ENCODE measurements at regions of chr10 and their contacts with region 1.

Region 1: DNA sequence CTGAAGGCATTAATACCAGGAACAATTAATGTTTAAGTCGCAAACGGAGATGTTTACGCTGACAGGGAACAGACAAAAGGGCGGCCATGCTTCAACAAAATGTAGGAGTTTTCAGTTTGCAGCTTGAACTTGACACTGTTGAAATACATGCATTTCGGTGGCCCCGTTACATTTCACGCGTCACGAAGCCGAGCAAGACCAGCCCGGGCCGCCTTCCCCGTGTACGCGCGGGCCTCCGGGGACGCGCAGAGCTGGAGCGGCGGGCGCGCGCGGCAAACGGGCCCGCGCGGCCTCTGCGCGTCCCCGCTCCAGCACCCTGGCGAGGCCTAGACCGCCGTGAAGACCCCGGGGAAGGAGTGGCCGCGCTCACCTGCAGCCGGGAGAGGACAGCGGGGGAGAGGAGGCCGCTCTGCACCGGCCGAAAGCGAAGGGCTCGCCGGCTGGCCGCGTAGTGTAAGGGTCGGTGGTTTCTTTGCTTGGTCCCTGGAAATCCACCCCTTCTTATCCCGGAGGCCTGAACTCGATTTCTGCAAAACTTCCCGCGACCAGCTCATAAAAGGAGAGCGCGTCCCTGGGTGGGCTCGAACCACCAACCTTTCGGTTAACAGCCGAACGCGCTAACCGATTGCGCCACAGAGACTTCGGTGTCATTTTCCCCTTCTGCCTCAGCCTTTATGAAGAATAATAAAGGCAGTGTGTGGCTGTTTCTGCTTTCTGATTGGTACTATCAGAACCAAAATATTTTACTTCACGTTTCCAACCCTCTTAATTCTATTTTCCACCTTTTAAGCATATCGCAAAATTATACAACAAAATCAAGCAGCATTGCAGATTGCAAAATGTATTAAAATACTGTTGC is 11.4 kb upstream of the EBLN1 start:
- DNase-seq: peak; percentile 90
- H3K4me3 Mint-ChIP-seq: peak overlapping the region; percentile 77
- H3K27ac Mint-ChIP-seq: peak overlapping the region; percentile 96
- H3K4me1 Mint-ChIP-seq: peaks cover 16% of the 10 kb centered on the region
- H3K27me3 Mint-ChIP-seq: peaks cover 4% of the 10 kb centered on the region

Region 2: GRCh38 chr10:22022257-22023032 is 206.7 kb before region 1 on chr10:
- CTCF ChIA-PET with region 1: no interaction called
- POLR2A ChIA-PET with region 1: no interaction called
- intact Hi-C with region 1: loop called (anchors 5 kb)
- DNase-seq: peak; percentile 78
- H3K4me3 Mint-ChIP-seq: peak overlapping the region; percentile 57
- H3K27ac Mint-ChIP-seq: peak overlapping the region; percentile 80
- H3K4me1 Mint-ChIP-seq: peaks cover 21% of the 10 kb centered on the region
- H3K27me3 Mint-ChIP-seq: no peaks in the 10 kb centered on the region

Region 3: DNA sequence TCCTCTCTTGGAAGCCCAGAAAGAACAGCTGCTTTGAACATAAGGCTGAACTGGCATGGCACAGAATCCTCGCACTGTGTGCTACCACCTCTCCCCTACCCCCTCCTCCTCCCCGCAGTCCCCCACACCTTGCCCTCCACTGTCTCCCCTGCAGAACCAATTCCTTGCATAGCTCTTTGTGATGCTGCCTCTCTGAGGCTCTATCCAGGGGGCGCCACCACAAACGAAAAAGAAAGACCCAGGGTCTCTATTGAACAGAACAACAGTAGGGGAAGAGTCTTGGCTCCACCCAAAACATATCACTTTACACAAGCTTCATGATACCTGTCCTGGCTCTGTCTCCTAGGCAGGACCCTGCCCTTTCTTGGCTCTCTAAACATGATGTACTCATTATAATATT is 14.8 kb after region 1 on chr10:
- CTCF ChIA-PET with region 1: interaction called, 20 read pairs
- POLR2A ChIA-PET with region 1: no interaction called
- intact Hi-C with region 1: loop called (anchors 1 kb)
- DNase-seq: peak; percentile 17
- H3K4me3 Mint-ChIP-seq: no peak overlapping the region
- H3K27ac Mint-ChIP-seq: no peak overlapping the region
- H3K4me1 Mint-ChIP-seq: peaks cover 39% of the 10 kb centered on the region
- H3K27me3 Mint-ChIP-seq: peaks cover 4% of the 10 kb centered on the region

Region 4: GRCh38 chr10:22251751-22252223 is 22.6 kb after region 1 on chr10:
- CTCF ChIA-PET with region 1: interaction called, 6 read pairs
- POLR2A ChIA-PET with region 1: interaction called, 7 read pairs
- intact Hi-C with region 1: loop called (anchors 1 kb)
- DNase-seq: peak; percentile 83
- H3K4me3 Mint-ChIP-seq: peak overlapping the region; percentile 83
- H3K27ac Mint-ChIP-seq: peak overlapping the region; percentile 97
- H3K4me1 Mint-ChIP-seq: peaks cover 42% of the 10 kb centered on the region
- H3K27me3 Mint-ChIP-seq: peaks cover 3% of the 10 kb centered on the region

Region 5: GRCh38 chr10:22294695-22295094 is 65.5 kb after region 1 on chr10:
- CTCF ChIA-PET with region 1: no interaction called
- POLR2A ChIA-PET with region 1: no interaction called
- intact Hi-C with region 1: no loop called
- DNase-seq: no peak
- H3K4me3 Mint-ChIP-seq: no peak overlapping the region
- H3K27ac Mint-ChIP-seq: no peak overlapping the region
- H3K4me1 Mint-ChIP-seq: no peaks in the 10 kb centered on the region
- H3K27me3 Mint-ChIP-seq: peaks cover 9% of the 10 kb centered on the region